Caco-2 (cell line): ENCODE measurements at regions of chr2 and their contacts with region 1.

Region 1: DNA sequence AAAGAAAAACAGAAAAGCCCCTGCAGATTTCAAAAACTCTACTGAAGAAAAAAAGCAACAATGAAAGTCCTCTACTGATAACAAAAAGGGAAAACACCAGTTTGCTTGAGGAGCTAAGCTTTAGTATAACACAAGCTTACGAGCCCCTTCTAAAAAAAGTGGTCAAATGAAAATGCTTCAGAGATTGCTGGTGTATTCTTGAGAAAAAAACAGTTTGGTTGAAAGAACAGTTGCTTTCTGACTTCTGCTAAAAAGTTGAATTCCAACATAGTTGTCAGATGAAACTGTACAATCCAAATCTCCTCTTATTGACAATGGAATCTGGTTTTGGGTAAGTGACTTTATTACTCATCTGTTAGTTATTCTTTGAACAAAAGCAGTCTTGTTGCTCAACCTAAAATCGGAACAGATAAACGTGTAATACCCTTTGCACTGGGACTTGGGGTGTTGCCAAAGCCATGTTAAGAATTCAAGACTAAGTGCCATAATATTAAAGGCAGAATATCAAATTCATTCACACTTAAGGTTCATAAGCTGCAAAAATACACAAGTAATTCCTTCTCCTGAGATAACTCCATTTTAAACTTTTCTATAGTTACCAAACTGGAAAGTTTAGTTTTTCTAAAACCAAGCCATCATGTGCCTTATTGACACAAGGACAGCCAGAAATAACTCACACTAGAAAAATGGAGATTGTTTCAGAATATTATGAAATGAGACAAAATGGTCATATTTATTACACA is 45.3 kb upstream of the SPAG16 start:
- DNase-seq: peak; percentile 55 to 74
- H3K4me3 ChIP-seq: no peak overlapping the region
- H3K4me3 Mint-ChIP-seq: peak overlapping the region; percentile 68
- H3K27ac Mint-ChIP-seq: peak overlapping the region; percentile 98
- H3K4me1 ChIP-seq: peaks cover 47% of the 10 kb centered on the region
- H3K4me1 Mint-ChIP-seq: peaks cover 33% of the 10 kb centered on the region
- H3K27me3 ChIP-seq: no peaks in the 10 kb centered on the region
- H3K27me3 Mint-ChIP-seq: no peaks in the 10 kb centered on the region
- CTCF ChIP-seq: no peak

Region 2: GRCh38 chr2:212777020-212777491 is 461.9 kb before region 1 on chr2:
- CTCF ChIA-PET with region 1: no interaction called
- POLR2A ChIA-PET with region 1: no interaction called
- intact Hi-C with region 1: loop called (anchors 2 kb)
- DNase-seq: peak; percentile 42 to 59
- H3K4me3 ChIP-seq: no peak overlapping the region
- H3K4me3 Mint-ChIP-seq: peak overlapping the region; percentile 56
- H3K27ac Mint-ChIP-seq: peak overlapping the region; percentile 44
- H3K4me1 ChIP-seq: peaks cover 8% of the 10 kb centered on the region
- H3K4me1 Mint-ChIP-seq: peaks cover 15% of the 10 kb centered on the region
- H3K27me3 ChIP-seq: no peaks in the 10 kb centered on the region; the same call in 1 of the 2 replicates
- H3K27me3 Mint-ChIP-seq: no peaks in the 10 kb centered on the region
- CTCF ChIP-seq: peak; percentile 50 to 67

Region 3: DNA sequence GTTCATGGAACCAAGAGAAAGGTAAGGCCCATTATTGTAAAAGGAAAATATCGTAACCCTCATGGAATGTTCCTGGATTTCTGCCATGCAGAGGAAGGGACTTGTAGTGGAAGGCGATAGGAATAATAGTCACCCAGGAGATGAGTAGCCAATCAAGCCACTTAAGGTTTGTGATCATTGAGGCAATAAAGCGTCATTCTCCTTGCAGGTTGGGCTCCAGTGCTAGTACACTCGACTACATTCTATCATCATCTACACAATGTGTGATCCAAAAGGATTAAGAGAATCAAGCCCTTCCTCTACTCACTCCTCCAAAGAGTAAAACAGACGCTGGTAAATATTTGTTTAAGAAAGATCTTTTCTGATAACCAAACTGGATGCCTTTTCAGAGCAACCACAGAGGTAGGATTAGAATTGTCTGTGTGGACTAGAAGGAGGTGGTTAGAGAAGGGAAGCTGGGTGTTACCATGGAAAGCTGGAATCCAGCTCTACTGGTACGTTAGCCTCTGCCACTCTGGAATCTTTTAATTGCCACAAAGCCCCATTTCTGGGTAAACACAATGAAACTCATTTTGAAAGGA is 333.2 kb before region 1 on chr2:
- CTCF ChIA-PET with region 1: no interaction called
- POLR2A ChIA-PET with region 1: no interaction called
- intact Hi-C with region 1: loop called (anchors 2 kb)
- DNase-seq: peak; percentile 81 to 85
- H3K4me3 ChIP-seq: no peak overlapping the region
- H3K4me3 Mint-ChIP-seq: peak overlapping the region; percentile 70
- H3K27ac Mint-ChIP-seq: peak overlapping the region; percentile 89
- H3K4me1 ChIP-seq: peaks cover 27% of the 10 kb centered on the region
- H3K4me1 Mint-ChIP-seq: peaks cover 32% of the 10 kb centered on the region
- H3K27me3 ChIP-seq: no peaks in the 10 kb centered on the region
- H3K27me3 Mint-ChIP-seq: no peaks in the 10 kb centered on the region
- CTCF ChIP-seq: no peak

Region 4: GRCh38 chr2:213157242-213157641 is 81.7 kb before region 1 on chr2:
- CTCF ChIA-PET with region 1: no interaction called
- POLR2A ChIA-PET with region 1: no interaction called
- intact Hi-C with region 1: loop called (anchors 1 kb)
- DNase-seq: no peak
- H3K4me3 ChIP-seq: no peak overlapping the region
- H3K4me3 Mint-ChIP-seq: no peak overlapping the region
- H3K27ac Mint-ChIP-seq: no peak overlapping the region
- H3K4me1 ChIP-seq: peaks cover 24% of the 10 kb centered on the region
- H3K4me1 Mint-ChIP-seq: peaks cover 4% of the 10 kb centered on the region
- H3K27me3 ChIP-seq: no peaks in the 10 kb centered on the region
- H3K27me3 Mint-ChIP-seq: no peaks in the 10 kb centered on the region
- CTCF ChIP-seq: no peak

Region 5: GRCh38 chr2:213189001-213189899 is 49.7 kb before region 1 on chr2:
- CTCF ChIA-PET with region 1: no interaction called
- POLR2A ChIA-PET with region 1: no interaction called
- intact Hi-C with region 1: loop called (anchors 1 kb)
- DNase-seq: peak; percentile 50 to 65
- H3K4me3 ChIP-seq: peak overlapping the region; percentile 15
- H3K4me3 Mint-ChIP-seq: peak overlapping the region; percentile 71
- H3K27ac Mint-ChIP-seq: peak overlapping the region; percentile 85
- H3K4me1 ChIP-seq: peaks cover 32% of the 10 kb centered on the region
- H3K4me1 Mint-ChIP-seq: peaks cover 28% of the 10 kb centered on the region
- H3K27me3 ChIP-seq: no peaks in the 10 kb centered on the region
- H3K27me3 Mint-ChIP-seq: no peaks in the 10 kb centered on the region
- CTCF ChIP-seq: no peak

Region 6: DNA sequence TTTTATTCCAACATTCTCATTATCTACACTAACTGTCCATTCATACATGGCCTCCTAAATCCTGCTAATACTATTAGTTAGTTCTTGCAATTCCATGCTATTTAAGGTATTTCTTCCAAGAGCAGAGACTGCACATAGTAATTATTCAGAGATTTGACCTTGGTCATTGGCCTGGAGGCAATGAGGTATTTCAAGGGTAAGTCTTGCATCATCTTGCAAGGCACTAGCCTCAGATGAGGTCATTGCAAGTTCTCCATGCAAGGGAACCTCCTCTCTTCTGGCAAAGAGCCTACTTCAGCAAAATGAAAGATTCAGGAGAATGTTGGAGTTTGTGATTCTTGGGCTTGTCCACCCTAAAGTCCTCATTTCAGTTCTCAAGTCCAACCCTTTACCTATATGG is 39.1 kb before region 1 on chr2:
- CTCF ChIA-PET with region 1: no interaction called
- POLR2A ChIA-PET with region 1: no interaction called
- intact Hi-C with region 1: no loop called
- DNase-seq: no peak
- H3K4me3 ChIP-seq: no peak overlapping the region
- H3K4me3 Mint-ChIP-seq: no peak overlapping the region
- H3K27ac Mint-ChIP-seq: no peak overlapping the region
- H3K4me1 ChIP-seq: no peaks in the 10 kb centered on the region
- H3K4me1 Mint-ChIP-seq: no peaks in the 10 kb centered on the region
- H3K27me3 ChIP-seq: no peaks in the 10 kb centered on the region
- H3K27me3 Mint-ChIP-seq: no peaks in the 10 kb centered on the region
- CTCF ChIP-seq: no peak

Region 7: DNA sequence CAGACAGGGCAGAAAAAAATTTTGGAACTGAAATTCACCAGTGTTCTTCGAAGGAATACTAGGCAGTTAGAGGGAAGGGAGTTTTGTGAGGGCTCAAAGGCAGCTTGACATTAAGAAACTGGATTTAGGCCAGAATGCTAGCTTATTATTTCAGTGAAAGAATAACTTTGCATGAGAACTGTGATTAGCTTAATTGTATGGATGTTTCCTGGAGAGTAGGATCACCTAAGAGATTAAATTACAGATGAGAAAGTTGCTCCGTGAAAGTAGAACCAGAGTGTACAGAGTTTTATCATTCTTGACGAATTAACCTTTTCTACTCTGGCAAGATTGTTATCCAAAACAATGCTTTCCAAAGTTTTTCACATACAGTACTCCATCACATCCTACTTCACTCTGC is 51.6 kb after region 1 on chr2:
- CTCF ChIA-PET with region 1: no interaction called
- POLR2A ChIA-PET with region 1: no interaction called
- intact Hi-C with region 1: no loop called
- DNase-seq: no peak
- H3K4me3 ChIP-seq: no peak overlapping the region
- H3K4me3 Mint-ChIP-seq: no peak overlapping the region
- H3K27ac Mint-ChIP-seq: no peak overlapping the region
- H3K4me1 ChIP-seq: no peaks in the 10 kb centered on the region
- H3K4me1 Mint-ChIP-seq: no peaks in the 10 kb centered on the region
- H3K27me3 ChIP-seq: no peaks in the 10 kb centered on the region
- H3K27me3 Mint-ChIP-seq: no peaks in the 10 kb centered on the region
- CTCF ChIP-seq: no peak

Region 8: GRCh38 chr2:214809751-214810564 is 1571.0 kb after region 1 on chr2:
- CTCF ChIA-PET with region 1: no interaction called
- POLR2A ChIA-PET with region 1: no interaction called
- intact Hi-C with region 1: loop called (anchors 10 kb)
- DNase-seq: peak; percentile 99 to 100
- H3K4me3 ChIP-seq: peak overlapping the region; percentile 68
- H3K4me3 Mint-ChIP-seq: peak overlapping the region; percentile 77
- H3K27ac Mint-ChIP-seq: peak overlapping the region; percentile 45
- H3K4me1 ChIP-seq: peaks cover 12% of the 10 kb centered on the region; the same call in 1 of the 2 replicates
- H3K4me1 Mint-ChIP-seq: peaks cover 10% of the 10 kb centered on the region
- H3K27me3 ChIP-seq: no peaks in the 10 kb centered on the region
- H3K27me3 Mint-ChIP-seq: no peaks in the 10 kb centered on the region
- CTCF ChIP-seq: no peak